Mammary epithelial cell (primary cell): ENCODE measurements at regions of chr3 and their contacts with region 1.

Region 1: DNA sequence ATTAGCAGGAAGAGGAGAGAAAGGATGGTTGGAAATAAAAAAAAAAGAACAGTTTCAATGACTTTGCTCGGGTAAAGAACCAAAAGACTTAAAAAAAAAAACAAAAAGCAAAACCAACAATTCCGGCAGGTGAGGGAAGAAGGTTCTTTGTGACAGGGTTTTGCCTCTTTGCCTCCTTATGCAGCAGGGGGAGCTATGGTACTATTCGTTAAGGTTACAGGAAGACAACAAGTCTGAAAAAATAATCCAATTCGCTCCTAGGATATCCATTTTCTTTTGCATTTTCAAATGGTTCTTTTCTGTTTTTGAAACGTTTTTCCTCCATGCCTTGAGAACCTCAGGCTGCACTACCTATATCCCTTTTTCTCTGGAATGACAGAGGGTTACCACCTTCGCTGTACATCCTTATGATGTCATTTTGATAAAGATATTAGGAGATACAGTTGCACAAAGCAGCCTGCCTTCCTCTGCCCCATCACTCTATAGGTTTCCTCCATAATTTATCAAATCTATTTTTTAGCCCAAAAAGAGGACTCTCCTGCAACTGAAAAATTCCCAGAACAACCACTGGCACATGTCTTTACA is 55.0 kb downstream of the CFAP20DC start:
- DNase-seq: peak; percentile 69
- H3K4me3 ChIP-seq: peak overlapping the region in 1 of 3 experiments; percentile 4
- H3K27ac ChIP-seq: peak overlapping the region; percentile 60
- H3K4me1 ChIP-seq: peaks cover 40% of the 10 kb centered on the region
- H3K27me3 ChIP-seq: no peaks in the 10 kb centered on the region
- CTCF ChIP-seq: peak; percentile 83 to 89

Region 2: DNA sequence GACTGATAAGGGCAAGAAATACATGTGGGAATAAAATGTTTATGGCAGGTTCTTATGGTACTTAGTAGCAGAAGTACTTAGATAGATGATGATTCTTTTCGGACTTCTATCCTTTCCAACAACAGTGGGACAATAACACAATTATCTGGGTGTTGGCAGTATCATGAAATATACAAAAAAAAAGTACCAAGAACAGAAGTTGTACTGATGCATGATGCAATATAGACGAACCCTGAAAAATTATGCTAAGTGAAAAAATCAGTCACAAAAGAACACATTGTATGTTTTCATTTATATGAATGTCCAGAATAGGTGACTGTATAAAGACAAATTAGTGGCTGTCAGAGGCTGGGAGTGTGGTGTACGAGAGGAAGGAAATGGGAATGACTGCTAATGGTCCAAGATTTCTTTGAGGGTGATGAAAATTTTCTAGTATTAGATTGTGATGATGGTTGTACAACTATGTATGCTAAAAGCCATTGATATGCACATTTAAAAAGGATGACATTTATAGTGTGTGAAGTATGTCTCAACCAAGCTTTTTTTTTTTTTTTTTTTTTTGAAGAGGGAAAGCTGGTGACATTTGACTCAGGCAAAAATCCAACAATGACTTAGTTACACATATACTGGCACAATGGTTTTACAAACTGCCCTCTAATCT is 1418.7 kb before region 1 on chr3:
- CTCF ChIA-PET with region 1: no interaction called
- dilution Hi-C with region 1: no loop called
- in situ Hi-C with region 1: no loop called
- intact Hi-C with region 1: no loop called
- DNase-seq: no peak
- H3K4me3 ChIP-seq: no peak overlapping the region
- H3K27ac ChIP-seq: no peak overlapping the region
- H3K4me1 ChIP-seq: no peaks in the 10 kb centered on the region
- H3K27me3 ChIP-seq: no peaks in the 10 kb centered on the region
- CTCF ChIP-seq: no peak

Region 3: DNA sequence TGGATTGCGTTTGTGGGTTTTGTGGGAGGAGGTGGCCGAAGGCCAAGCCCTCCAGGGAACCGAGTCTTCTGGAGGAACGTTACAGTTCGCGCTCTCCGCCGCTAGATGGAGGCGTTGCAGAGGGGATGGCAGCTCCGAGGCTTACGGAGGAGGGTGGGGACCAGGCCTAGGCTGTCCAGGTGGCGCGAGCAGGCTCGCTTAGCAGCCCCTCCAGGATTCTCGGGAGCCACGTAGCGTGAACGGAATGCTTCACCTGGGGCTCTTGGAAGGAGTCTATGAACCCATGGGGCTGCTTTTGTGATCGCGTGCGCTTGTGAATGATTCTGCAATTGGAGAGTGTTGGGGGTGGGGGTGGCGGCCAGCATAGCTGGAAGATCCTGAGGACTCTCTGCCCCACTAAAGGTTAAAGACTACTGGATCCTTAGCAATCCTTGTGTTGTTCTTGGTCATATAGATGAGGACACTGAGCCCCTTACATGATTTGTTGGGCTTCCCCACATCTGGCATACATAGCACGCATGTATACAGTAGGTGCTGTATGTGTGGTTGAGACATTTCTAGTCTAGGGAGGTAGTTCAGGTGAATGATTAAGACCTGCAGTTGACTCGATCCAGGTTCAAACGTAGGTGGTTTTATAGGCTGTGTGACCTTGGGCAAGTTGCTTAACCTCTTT is 354.0 kb before region 1 on chr3:
- CTCF ChIA-PET with region 1: no interaction called
- dilution Hi-C with region 1: no loop called
- in situ Hi-C with region 1: no loop called
- intact Hi-C with region 1: loop called (anchors 2 kb)
- DNase-seq: peak; percentile 64
- H3K4me3 ChIP-seq: no peak overlapping the region
- H3K27ac ChIP-seq: no peak overlapping the region
- H3K4me1 ChIP-seq: peaks cover 10% of the 10 kb centered on the region
- H3K27me3 ChIP-seq: no peaks in the 10 kb centered on the region
- CTCF ChIP-seq: peak; percentile 75 to 96

Region 4: DNA sequence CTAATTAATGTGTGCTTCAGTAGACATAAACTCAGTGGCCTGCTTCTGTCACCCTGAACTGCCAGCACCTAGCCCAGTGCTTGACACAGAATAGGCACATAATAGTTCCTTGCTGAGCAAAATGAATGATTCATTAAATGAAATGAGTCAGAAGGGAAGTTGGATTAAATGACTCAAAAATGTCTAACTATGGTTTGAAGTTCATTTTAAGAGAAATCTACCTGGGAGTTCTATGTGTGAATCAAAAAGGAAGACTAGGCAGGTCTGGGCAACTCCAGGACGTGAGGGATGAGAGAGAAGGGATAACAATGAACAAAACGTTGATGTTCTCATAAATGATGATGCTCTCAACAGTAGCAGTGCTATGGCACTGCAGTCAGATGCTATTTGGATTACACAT is 120.0 kb before region 1 on chr3:
- CTCF ChIA-PET with region 1: no interaction called
- dilution Hi-C with region 1: no loop called
- in situ Hi-C with region 1: no loop called
- intact Hi-C with region 1: loop called (anchors 2 kb)
- DNase-seq: peak; percentile 98
- H3K4me3 ChIP-seq: no peak overlapping the region
- H3K27ac ChIP-seq: peak overlapping the region; percentile 96
- H3K4me1 ChIP-seq: peaks cover 52% of the 10 kb centered on the region
- H3K27me3 ChIP-seq: no peaks in the 10 kb centered on the region
- CTCF ChIP-seq: no peak

Region 5: DNA sequence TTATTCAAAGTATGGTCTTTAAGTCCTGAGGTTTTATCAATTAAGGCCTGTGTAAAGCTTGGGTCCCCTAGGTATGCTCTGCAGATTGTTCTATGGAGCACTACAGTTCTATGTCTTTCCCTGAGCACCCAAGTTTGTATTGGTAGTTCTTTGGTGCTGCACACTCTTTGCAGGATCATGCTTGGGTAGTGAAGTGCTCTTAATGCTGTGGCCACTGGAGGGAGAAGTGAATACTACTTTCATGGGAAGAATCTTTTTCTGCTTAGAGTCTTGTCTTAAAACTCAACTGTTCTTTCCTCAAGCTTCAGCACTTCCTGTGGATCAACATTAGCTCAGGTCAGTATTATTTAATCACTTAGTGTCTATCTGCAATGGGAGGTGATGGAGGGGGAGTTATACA is 148.6 kb after region 1 on chr3:
- CTCF ChIA-PET with region 1: no interaction called
- dilution Hi-C with region 1: no loop called
- in situ Hi-C with region 1: no loop called
- intact Hi-C with region 1: loop called (anchors 5 kb)
- DNase-seq: peak; percentile 30
- H3K4me3 ChIP-seq: no peak overlapping the region
- H3K27ac ChIP-seq: no peak overlapping the region
- H3K4me1 ChIP-seq: peaks cover 13% of the 10 kb centered on the region
- H3K27me3 ChIP-seq: no peaks in the 10 kb centered on the region
- CTCF ChIP-seq: peak; percentile 23 to 40

Region 6: GRCh38 chr3:59313365-59313764 is 318.5 kb after region 1 on chr3:
- CTCF ChIA-PET with region 1: interaction called, 7 read pairs
- dilution Hi-C with region 1: no loop called
- in situ Hi-C with region 1: no loop called
- intact Hi-C with region 1: loop called (anchors 1 kb)
- DNase-seq: peak; percentile 26
- H3K4me3 ChIP-seq: no peak overlapping the region
- H3K27ac ChIP-seq: no peak overlapping the region
- H3K4me1 ChIP-seq: peaks cover 15% of the 10 kb centered on the region
- H3K27me3 ChIP-seq: no peaks in the 10 kb centered on the region
- CTCF ChIP-seq: peak; percentile 59 to 78

Region 7: DNA sequence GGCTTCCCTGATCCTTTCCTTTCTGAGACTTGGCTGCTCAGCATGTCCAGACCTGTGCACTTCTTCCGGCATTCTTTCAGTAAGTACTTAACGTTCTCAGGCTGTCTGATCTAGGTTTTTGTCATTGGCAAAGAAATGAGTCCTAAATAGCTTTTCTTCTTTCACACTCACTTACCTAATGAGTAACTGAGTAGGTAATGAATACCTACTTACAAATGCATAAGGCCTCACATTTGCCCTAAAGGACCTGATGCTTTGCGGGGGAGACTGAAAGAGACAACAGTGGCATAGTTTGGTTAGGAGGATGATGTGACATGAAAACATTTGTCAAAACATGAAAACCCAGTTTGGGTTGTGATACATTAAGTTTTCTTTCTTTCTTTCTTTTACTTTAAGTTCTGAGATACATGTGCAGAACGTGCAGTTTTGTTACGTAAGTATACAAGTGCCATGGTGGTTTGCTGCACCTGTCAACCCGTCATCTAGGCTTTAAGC is 571.7 kb after region 1 on chr3:
- CTCF ChIA-PET with region 1: no interaction called
- dilution Hi-C with region 1: no loop called
- in situ Hi-C with region 1: no loop called
- intact Hi-C with region 1: loop called (anchors 2 kb)
- DNase-seq: peak; percentile 94
- H3K4me3 ChIP-seq: no peak overlapping the region
- H3K27ac ChIP-seq: peak overlapping the region; percentile 79
- H3K4me1 ChIP-seq: peaks cover 55% of the 10 kb centered on the region
- H3K27me3 ChIP-seq: no peaks in the 10 kb centered on the region
- CTCF ChIP-seq: no peak

Region 8: DNA sequence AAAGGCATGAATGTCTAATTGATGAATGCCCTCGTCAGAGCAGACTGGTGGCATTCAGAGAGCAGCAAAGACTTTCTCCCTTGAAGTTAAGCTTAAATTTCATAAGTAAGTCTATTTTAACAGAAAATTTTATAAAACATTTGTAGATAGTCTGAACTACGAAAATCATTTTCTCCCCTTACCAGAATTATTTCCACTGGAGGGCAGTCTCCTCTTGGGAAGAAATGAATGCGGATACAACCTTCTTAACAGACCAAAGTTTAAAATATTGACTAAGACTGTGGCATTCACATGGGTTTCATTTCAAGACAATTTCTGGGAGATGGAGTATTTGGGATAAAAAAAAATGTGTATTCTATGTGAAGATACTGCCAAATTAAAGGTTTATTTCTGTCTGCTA is 1587.5 kb after region 1 on chr3:
- CTCF ChIA-PET with region 1: no interaction called
- dilution Hi-C with region 1: no loop called
- in situ Hi-C with region 1: no loop called
- intact Hi-C with region 1: loop called (anchors 10 kb)
- DNase-seq: no peak
- H3K4me3 ChIP-seq: no peak overlapping the region
- H3K27ac ChIP-seq: no peak overlapping the region
- H3K4me1 ChIP-seq: peaks cover 15% of the 10 kb centered on the region
- H3K27me3 ChIP-seq: no peaks in the 10 kb centered on the region
- CTCF ChIP-seq: peak in 1 of 2 donors; percentile 31